H1 (cell line): ENCODE measurements at regions of chr1 and their contacts with region 1.

Region 1: GRCh38 chr1:39609618-39610331 is 29.7 kb downstream of the HEYL start:
- DNase-seq: peak; percentile 58 to 97
- H3K4me3 ChIP-seq: peak overlapping the region; percentile 59 to 71 (median 60)
- H3K27ac ChIP-seq: no peak overlapping the region
- H3K4me1 ChIP-seq: peaks cover 0 to 5% (median 0%) of the 10 kb centered on the region in 4 experiments; a peak in 2 of 7 replicates
- H3K27me3 ChIP-seq: peaks cover 0 to 13% (median 8%) of the 10 kb centered on the region in 4 experiments; a peak in 6 of 7 replicates
- CTCF ChIP-seq: peak; percentile 90 to 97 (median 91)
- EP300 ChIP-seq: no peak
- POLR2A ChIP-seq: no peak
- RAD21 ChIP-seq: peak; percentile 46 to 62

Region 2: DNA sequence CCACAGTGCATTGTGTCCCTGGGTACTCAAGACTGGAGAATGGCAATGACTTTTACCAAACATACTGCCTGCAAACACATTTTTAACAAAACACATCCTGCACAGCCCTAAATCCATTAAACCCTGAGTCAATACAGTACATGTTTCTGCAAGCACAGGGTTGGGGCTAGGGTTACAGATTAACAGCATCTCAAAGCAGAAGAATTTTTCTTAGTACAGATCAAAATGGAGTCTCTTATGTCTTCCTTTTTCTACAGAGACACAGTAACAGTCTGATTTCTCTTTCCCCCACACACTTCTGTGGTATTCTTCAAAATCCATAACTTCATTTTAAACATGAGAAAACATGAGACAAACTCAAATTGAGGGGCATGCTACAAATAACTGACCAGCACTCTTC is 104.5 kb before region 1 on chr1:
- CTCF ChIA-PET with region 1: no interaction called
- POLR2A ChIA-PET with region 1: no interaction called
- DNase-seq: no peak
- H3K4me3 ChIP-seq: no peak overlapping the region
- H3K27ac ChIP-seq: no peak overlapping the region
- H3K4me1 ChIP-seq: no peaks in the 10 kb centered on the region; a peak in 1 of 7 replicates
- H3K27me3 ChIP-seq: no peaks in the 10 kb centered on the region; a peak in 1 of 7 replicates
- CTCF ChIP-seq: no peak
- EP300 ChIP-seq: no peak
- POLR2A ChIP-seq: no peak
- RAD21 ChIP-seq: no peak

Region 3: DNA sequence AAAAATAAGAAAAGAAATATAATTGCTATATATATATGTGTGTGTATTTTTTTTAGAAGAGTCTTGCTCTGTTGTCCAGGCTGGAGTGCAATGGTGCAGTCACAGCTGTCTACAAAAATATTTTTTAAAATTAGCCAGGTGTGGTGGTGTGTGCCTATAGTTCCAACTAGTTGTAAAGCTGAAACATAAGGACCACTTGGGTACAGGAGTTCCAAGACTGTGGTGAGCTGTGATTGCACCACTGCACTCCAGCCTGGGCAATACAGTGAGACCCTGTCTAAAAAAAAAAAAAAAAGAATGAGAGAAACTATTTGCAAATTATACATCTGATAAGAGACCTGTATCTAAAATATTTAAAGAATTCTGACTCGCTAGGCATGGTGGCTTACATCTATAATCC is 76.3 kb before region 1 on chr1:
- CTCF ChIA-PET with region 1: no interaction called
- POLR2A ChIA-PET with region 1: no interaction called
- DNase-seq: no peak
- H3K4me3 ChIP-seq: no peak overlapping the region
- H3K27ac ChIP-seq: no peak overlapping the region
- H3K4me1 ChIP-seq: no peaks in the 10 kb centered on the region
- H3K27me3 ChIP-seq: no peaks in the 10 kb centered on the region
- CTCF ChIP-seq: no peak
- EP300 ChIP-seq: no peak
- POLR2A ChIP-seq: no peak
- RAD21 ChIP-seq: no peak

Region 4: GRCh38 chr1:39575191-39576015 is 34.4 kb before region 1 on chr1:
- CTCF ChIA-PET with region 1: interaction called, 11 read pairs
- POLR2A ChIA-PET with region 1: interaction called, 4 read pairs
- DNase-seq: no peak
- H3K4me3 ChIP-seq: peak overlapping the region; percentile 68 to 99 (median 73)
- H3K27ac ChIP-seq: no peak overlapping the region
- H3K4me1 ChIP-seq: peaks cover 0 to 19% (median 7%) of the 10 kb centered on the region in 4 experiments; a peak in 5 of 7 replicates
- H3K27me3 ChIP-seq: no peaks in the 10 kb centered on the region
- CTCF ChIP-seq: no peak
- EP300 ChIP-seq: no peak
- POLR2A ChIP-seq: 0 out of 3 replicates have a peak, but pooled peaks of 1 of the 2 experiments have one; percentile 27
- RAD21 ChIP-seq: no peak

Region 5: DNA sequence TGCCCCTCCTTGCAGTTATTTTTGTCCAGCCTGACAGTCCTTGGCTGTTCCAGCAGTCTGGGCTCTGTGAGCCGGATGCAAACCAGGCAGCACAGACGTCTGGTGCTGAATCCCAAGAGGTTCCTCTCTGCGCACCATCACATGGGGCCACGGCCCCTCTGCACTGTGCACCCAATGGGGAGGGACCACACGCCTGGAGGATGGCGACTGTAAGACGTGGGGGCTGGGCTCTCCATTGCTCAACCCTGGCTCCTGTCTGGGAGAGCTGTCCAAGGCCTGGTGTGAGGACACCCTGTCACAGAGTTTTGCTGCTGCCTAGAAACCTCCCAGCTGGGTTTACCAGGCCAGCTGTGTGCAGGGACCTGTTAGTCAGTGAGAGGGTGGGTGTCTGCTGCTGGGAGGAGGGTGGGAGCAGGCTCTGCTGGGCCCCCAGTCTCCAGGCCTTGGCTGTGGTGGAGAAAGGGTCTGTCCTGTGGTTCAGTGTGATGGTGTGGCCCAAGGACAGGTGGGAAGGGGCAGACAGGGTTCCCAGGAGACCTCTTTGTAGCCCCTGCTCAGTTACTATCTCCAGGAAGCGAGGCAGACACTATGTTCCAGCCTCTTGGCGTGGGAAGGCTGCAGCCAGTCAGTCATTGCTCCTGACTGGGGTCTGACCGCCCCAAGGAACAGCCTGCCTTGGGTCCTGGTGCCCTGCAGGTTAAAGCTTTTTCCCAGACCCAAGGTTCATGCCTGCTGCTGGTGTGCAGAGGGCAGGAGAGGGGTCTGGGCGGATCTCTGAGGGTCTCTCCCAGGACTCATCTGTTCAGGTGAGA is 15.9 kb after region 1 on chr1:
- CTCF ChIA-PET with region 1: interaction called, 337 read pairs
- POLR2A ChIA-PET with region 1: interaction called, 3 read pairs
- DNase-seq: no peak
- H3K4me3 ChIP-seq: no peak overlapping the region
- H3K27ac ChIP-seq: no peak overlapping the region
- H3K4me1 ChIP-seq: no peaks in the 10 kb centered on the region
- H3K27me3 ChIP-seq: peaks cover 0 to 5% (median 1%) of the 10 kb centered on the region in 4 experiments; a peak in 2 of 7 replicates
- CTCF ChIP-seq: no peak
- EP300 ChIP-seq: no peak
- POLR2A ChIP-seq: no peak
- RAD21 ChIP-seq: no peak

Region 6: GRCh38 chr1:39701049-39701439 is 91.3 kb after region 1 on chr1:
- CTCF ChIA-PET with region 1: interaction called, 14 read pairs
- POLR2A ChIA-PET with region 1: interaction called, 3 read pairs
- DNase-seq: no peak
- H3K4me3 ChIP-seq: peak overlapping the region; percentile 3 to 48 (median 22); a peak in 5 of 8 replicates
- H3K27ac ChIP-seq: no peak overlapping the region
- H3K4me1 ChIP-seq: peaks cover 0 to 17% (median 9%) of the 10 kb centered on the region in 4 experiments; a peak in 5 of 7 replicates
- H3K27me3 ChIP-seq: peaks cover 29 to 93% (median 65%) of the 10 kb centered on the region in 4 experiments
- CTCF ChIP-seq: no peak
- EP300 ChIP-seq: no peak
- POLR2A ChIP-seq: no peak
- RAD21 ChIP-seq: no peak

Region 7: DNA sequence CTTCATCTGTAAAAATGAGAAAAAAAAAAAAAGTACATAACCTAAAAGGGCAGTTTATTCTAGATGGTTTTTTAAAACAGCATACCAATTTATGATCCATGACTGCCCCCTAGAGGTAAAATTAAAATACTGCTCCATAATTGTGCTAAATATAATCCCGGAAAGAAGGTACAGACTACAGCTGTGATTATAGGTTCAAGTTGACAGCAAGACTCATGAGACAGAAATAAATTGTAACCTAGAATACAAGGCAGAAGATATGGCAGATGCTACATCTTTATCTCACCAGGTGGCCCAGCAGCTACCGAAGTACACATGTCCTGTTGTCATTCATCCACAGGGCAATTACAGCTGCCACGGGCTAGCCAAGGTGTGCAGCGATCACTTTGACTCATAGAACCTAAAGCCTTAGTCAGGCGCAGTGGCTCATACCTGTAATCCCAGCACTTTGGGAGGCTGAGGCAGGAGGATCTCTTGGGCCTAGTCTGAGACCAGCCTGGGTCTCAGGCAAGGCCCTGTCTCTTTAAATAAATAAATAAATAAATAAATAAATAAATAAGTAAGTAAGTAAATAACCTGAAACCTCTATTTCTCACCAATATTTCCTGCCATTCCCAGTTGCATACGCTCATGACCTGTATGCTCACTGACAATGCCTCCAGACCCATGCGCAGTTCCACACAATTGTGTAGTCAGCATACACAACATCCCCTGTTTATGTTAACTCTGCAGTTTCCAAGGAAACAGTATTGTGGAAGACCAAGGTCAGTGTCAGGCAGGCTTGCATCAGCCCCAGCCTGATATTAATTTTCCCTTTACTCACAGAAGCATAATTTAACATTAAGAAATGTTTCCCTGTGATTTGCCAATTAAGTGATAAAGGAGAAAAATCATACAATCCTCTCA is 110.6 kb after region 1 on chr1:
- CTCF ChIA-PET with region 1: interaction called, 25 read pairs
- POLR2A ChIA-PET with region 1: no interaction called
- DNase-seq: no peak
- H3K4me3 ChIP-seq: no peak overlapping the region
- H3K27ac ChIP-seq: no peak overlapping the region
- H3K4me1 ChIP-seq: no peaks in the 10 kb centered on the region
- H3K27me3 ChIP-seq: peaks cover 31 to 66% (median 45%) of the 10 kb centered on the region in 4 experiments
- CTCF ChIP-seq: peak in 2 of 3 experiments; percentile 29 to 44; a peak in 2 of 4 replicates
- EP300 ChIP-seq: no peak
- POLR2A ChIP-seq: no peak
- RAD21 ChIP-seq: peak; percentile 66 to 77